Sigmoid colon (tissue), 7 donors: ENCODE measurements at regions of chr17 and their contacts with region 1.

Region 1: GRCh38 chr17:40472535-40473452 is 28.6 kb downstream of the TNS4 start:
- DNase-seq: no peak
- H3K4me3 ChIP-seq: no peak overlapping the region
- H3K27ac ChIP-seq: peak overlapping the region; percentile 65 to 91 (median 84)
- H3K4me1 ChIP-seq: peaks cover 0 to 64% (median 62%) of the 10 kb centered on the region in 4 donors
- H3K27me3 ChIP-seq: no peaks in the 10 kb centered on the region
- CTCF ChIP-seq: no peak
- EP300 ChIP-seq: no peak
- POLR2A ChIP-seq: no peak

Region 2: GRCh38 chr17:40038882-40039513 is 433.8 kb before region 1 on chr17:
- intact Hi-C with region 1: no loop called
- DNase-seq: peak; percentile 96
- H3K4me3 ChIP-seq: no peak overlapping the region
- H3K27ac ChIP-seq: peak overlapping the region; percentile 80 to 86 (median 84)
- H3K4me1 ChIP-seq: peaks cover 0 to 41% (median 35%) of the 10 kb centered on the region in 4 donors
- H3K27me3 ChIP-seq: no peaks in the 10 kb centered on the region
- CTCF ChIP-seq: peak; percentile 77 to 85 (median 83)
- EP300 ChIP-seq: peak; percentile 17 to 83 (median 70)
- POLR2A ChIP-seq: no peak

Region 3: GRCh38 chr17:40303009-40303657 is 169.7 kb before region 1 on chr17:
- intact Hi-C with region 1: no loop called
- DNase-seq: no peak
- H3K4me3 ChIP-seq: no peak overlapping the region
- H3K27ac ChIP-seq: peak overlapping the region; percentile 4 to 86 (median 82)
- H3K4me1 ChIP-seq: peaks cover 0 to 64% (median 62%) of the 10 kb centered on the region in 4 donors
- H3K27me3 ChIP-seq: no peaks in the 10 kb centered on the region
- CTCF ChIP-seq: peak; percentile 73 to 85 (median 76)
- EP300 ChIP-seq: no peak
- POLR2A ChIP-seq: no peak

Region 4: DNA sequence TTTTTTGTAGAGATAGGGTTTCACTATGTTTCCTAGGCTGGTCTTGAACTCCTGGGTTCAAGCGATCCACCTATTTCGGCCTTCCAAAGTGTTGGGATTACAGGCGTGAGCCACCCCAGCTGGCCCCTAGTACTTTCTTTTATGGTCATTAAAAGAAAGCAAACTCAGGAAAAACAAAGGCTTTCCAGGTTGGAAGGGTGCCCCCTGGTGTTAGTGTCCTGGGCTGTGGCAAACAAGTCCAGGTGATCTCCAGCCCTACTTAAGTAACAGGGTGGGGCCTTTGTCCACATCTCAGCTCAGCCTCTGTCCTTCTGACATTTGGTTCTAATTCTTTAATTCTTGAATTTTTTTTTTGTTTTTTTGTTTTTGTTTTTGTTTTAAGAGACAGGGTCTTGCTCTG is 22.6 kb before region 1 on chr17:
- intact Hi-C with region 1: loop called (anchors 2 kb)
- DNase-seq: no peak
- H3K4me3 ChIP-seq: no peak overlapping the region
- H3K27ac ChIP-seq: peak overlapping the region; percentile 93 to 99 (median 95)
- H3K4me1 ChIP-seq: peaks cover 0 to 98% (median 88%) of the 10 kb centered on the region in 4 donors
- H3K27me3 ChIP-seq: no peaks in the 10 kb centered on the region
- CTCF ChIP-seq: peak in 3 of 4 experiments; percentile 29 to 48 (median 37)
- EP300 ChIP-seq: no peak
- POLR2A ChIP-seq: no peak